ENCODE measurements at regions of chr1 and their contacts with region 1.

Region 1: DNA sequence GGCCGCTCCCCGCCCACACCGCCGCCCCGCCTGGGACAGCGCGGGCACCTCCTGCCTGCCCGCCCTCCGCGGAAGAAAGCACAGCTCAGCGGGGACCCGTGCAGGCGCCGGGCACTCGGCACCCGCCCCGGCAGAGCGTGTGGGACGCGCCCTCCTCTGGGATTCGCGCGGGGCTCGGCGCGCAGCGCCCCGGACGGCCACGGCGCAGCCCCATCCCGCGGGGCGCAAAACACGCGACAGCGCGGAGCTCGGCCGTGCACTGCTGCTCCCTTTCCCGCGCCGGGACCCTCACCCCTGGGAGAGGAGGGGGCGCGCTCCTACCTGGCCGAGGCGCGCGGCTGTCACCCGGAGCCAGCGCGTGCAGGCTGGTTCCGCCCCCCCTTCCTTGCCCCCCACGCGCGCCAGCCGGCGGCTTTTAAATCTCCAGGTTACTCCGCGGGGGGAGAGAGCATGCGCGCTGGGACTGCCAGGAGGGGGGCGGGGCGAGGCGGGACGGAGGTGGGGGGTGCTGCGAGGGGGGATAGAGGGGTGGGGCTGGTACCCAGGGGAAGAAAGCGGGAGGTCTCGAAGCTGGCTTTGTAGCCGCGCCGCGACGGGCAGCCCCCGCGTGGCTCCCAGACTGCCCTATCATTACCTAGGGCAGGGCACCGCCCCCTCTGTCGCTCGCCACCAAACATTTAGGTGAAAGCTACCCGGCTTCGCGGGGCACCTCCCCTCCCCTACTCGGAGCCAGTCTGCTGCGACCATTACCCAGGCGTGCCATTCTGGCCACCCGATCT is at the start of gene SLC45A3:
- DNase-seq: peak; percentile 38 to 78 (median 73)
- H3K4me3 ChIP-seq: peak within 1 kb of the TSS; percentile 42 to 86 (median 81)
- H3K27ac ChIP-seq: peak within 1 kb of the TSS; percentile 25 to 81
- H3K4me1 ChIP-seq: peaks cover 15 to 56% (median 49%) of the 10 kb centered on the region in 4 experiments
- H3K27me3 ChIP-seq: no peaks in the 10 kb centered on the region

Region 2: DNA sequence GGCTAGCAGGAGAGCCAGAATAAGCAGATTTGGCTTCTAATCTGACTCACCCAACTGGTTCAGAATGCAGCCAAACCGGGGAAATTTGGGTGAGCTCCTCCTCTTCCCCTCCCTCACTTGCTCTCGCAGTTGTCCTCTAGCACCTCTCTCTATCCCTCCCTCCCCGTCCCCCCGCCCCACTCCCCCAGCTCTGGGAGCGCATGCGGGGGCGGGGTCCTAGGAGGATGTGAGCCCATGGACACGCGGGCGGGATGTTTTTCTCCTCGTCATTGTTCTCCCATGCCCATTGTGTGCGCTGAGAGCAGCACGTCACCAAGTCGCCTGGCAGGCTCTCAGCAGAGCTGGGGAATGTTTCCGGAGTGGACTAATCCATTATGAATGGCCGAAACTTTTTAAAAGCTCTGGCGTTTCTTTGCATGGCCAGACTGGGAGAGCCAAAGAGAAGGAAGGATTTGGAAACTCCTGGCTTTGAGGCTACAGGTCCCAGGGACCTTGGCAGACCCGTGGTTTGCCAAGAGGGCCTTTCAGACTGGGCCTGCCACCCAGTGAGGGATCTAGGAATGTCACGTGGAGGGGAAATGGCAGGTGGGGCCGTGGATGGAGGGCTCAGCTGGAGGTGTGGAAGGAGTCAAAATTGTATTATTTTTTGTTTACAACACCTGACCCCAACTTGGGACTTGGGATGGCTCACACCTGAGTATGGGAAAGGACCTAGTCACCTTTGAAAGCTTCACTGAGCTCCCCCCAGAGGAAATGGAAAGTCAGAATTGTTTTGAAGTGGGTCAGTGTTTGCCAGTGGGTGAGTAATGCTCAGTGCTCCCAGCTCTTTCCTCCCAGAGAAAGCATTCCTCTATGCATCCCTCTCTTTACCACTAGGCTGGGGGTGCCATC is 136.6 kb before region 1 on chr1:
- CTCF ChIA-PET with region 1: no interaction called
- POLR2A ChIA-PET with region 1: no interaction called
- DNase-seq: peak; percentile 68 to 91 (median 87)
- H3K4me3 ChIP-seq: peak overlapping the region in 4 of 7 experiments; percentile 19 to 67 (median 42)
- H3K27ac ChIP-seq: no peak overlapping the region
- H3K4me1 ChIP-seq: peaks cover 0 to 10% (median 5%) of the 10 kb centered on the region in 4 experiments
- H3K27me3 ChIP-seq: peaks cover 0 to 31% (median 21%) of the 10 kb centered on the region in 5 experiments

Region 3: DNA sequence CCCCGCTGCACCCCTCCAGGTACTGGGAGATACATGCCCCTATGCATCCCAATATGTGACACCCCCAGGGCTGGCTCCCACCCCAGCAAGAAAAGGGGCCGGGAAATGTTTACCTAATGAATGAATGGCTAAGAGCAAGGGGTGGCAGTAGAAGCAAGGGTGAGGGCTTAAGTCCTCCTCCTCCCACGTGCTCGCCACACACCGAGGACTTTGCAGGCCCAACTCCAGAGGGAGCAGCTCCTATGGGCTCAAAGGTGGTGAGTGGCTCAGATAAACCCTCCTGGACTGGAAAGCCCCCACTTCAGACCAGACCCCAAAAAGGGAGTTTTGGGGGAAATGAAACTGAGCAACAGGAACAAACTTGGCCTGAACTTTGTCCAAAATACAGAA is 11.3 kb before region 1 on chr1:
- CTCF ChIA-PET with region 1: interaction called, 17 read pairs
- POLR2A ChIA-PET with region 1: no interaction called
- DNase-seq: peak in 2 of 3 donors; percentile 80
- H3K4me3 ChIP-seq: peak overlapping the region in 3 of 7 experiments; percentile 8 to 35 (median 15)
- H3K27ac ChIP-seq: peak overlapping the region in 1 of 2 experiments; percentile 61
- H3K4me1 ChIP-seq: peaks cover 0 to 79% (median 72%) of the 10 kb centered on the region in 4 experiments
- H3K27me3 ChIP-seq: no peaks in the 10 kb centered on the region

Region 4: DNA sequence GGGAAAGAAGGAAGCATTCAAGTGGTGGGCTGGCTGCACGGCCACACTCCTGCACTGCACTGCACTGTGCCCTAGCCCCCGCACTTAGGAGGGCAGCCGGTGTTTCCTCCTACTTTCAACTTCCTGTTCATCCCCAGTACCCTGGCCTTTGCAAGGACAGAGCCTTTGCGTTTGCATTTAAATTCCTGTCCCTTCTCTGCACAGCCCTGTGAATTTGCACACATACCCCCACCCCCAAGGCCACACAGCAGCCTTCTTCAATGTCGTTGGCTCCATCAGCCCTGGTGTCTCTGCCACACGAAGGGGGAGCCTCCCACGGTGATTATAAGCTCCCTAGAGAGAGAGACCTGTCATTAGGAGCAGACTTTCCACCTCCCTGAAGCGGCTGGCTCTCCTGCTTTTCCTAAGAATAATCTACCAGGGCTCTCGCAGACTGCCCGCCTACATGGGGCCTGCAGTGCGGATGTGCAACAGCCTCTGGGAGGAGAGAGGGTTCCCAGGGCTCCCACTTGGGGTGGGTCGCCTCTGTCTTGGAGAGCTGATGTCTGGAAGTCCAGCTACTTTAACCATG is 13.2 kb after region 1 on chr1:
- CTCF ChIA-PET with region 1: interaction called, 1,013 read pairs
- POLR2A ChIA-PET with region 1: interaction called, 4 read pairs
- DNase-seq: peak in 1 of 3 donors; percentile 58
- H3K4me3 ChIP-seq: peak overlapping the region in 2 of 7 experiments; percentile 11 to 38
- H3K27ac ChIP-seq: peak overlapping the region in 1 of 2 experiments; percentile 21
- H3K4me1 ChIP-seq: peaks cover 3 to 64% (median 54%) of the 10 kb centered on the region in 4 experiments
- H3K27me3 ChIP-seq: no peaks in the 10 kb centered on the region

Region 5: DNA sequence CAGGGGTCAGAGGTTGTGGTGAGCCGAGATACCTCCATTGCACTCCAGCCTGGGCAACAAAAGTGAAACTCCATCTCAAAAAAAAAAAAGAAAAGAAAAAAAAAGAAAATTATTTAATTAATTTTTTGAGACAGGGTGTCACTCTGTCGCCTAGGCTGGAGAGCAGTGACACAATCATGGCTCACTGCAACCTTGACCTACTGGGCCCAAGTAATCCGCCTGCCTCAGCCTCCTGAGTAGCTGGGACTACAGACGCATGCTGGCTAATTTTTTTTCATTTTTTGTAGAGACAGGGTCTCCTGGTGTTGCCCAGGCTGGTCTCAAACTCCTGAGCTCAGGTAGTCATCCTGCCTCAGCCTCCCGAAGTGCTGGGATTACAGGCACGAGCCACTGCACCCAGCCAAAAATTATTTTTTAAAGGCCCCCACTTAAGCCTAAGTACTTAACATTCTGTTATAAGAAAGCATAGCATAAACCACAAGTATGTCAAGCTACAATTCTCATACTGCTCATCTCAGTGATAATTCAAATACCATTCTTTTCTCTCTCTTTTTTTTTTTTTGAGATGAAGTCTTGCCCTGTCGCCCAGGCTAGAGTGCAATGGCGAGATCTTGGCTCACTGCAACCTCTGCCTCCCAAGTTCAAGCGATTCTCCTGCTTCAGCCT is 49.8 kb after region 1 on chr1:
- CTCF ChIA-PET with region 1: no interaction called
- POLR2A ChIA-PET with region 1: no interaction called
- DNase-seq: no peak
- H3K4me3 ChIP-seq: no peak overlapping the region
- H3K27ac ChIP-seq: no peak overlapping the region
- H3K4me1 ChIP-seq: no peaks in the 10 kb centered on the region
- H3K27me3 ChIP-seq: no peaks in the 10 kb centered on the region